Calu3 (cell line): ENCODE measurements at regions of chr22 and their contacts with region 1.

Region 1: GRCh38 chr22:19218541-19219233 is 40.2 kb upstream of the SLC25A1 start:
- DNase-seq: no peak
- H3K4me3 Mint-ChIP-seq: no peak overlapping the region
- H3K27ac Mint-ChIP-seq: no peak overlapping the region
- H3K4me1 Mint-ChIP-seq: no peaks in the 10 kb centered on the region
- H3K27me3 Mint-ChIP-seq: no peaks in the 10 kb centered on the region
- CTCF ChIP-seq: no peak

Region 2: GRCh38 chr22:19253143-19253542 is 34.5 kb after region 1 on chr22:
- CTCF ChIA-PET with region 1: no interaction called
- intact Hi-C with region 1: no loop called
- DNase-seq: no peak
- H3K4me3 Mint-ChIP-seq: no peak overlapping the region
- H3K27ac Mint-ChIP-seq: no peak overlapping the region
- H3K4me1 Mint-ChIP-seq: no peaks in the 10 kb centered on the region
- H3K27me3 Mint-ChIP-seq: no peaks in the 10 kb centered on the region
- CTCF ChIP-seq: no peak

Region 3: DNA sequence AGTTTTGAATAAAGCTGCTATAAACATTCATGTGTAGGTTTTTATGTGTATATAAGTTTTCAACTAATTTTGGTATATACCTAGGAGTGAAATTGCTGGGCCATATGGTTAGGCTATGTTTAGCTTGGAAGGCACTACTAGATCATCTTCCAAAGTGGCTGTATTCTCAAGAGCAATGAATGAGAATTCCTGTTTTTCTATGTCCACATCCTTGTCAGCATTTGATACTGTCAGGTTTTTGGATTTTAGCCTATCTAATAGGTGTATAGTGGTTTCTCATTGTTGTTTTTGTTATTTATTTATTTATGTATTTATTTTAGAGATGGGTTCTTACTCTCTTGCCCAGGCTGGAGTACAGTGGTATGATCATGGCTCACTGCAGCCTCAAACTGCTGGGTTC is 99.2 kb after region 1 on chr22:
- CTCF ChIA-PET with region 1: no interaction called
- intact Hi-C with region 1: no loop called
- DNase-seq: no peak
- H3K4me3 Mint-ChIP-seq: no peak overlapping the region
- H3K27ac Mint-ChIP-seq: no peak overlapping the region
- H3K4me1 Mint-ChIP-seq: no peaks in the 10 kb centered on the region
- H3K27me3 Mint-ChIP-seq: no peaks in the 10 kb centered on the region
- CTCF ChIP-seq: no peak

Region 4: GRCh38 chr22:19337137-19337536 is 118.5 kb after region 1 on chr22:
- CTCF ChIA-PET with region 1: interaction called, 10 read pairs
- intact Hi-C with region 1: no loop called
- DNase-seq: no peak
- H3K4me3 Mint-ChIP-seq: no peak overlapping the region
- H3K27ac Mint-ChIP-seq: no peak overlapping the region
- H3K4me1 Mint-ChIP-seq: peaks cover 10% of the 10 kb centered on the region
- H3K27me3 Mint-ChIP-seq: no peaks in the 10 kb centered on the region
- CTCF ChIP-seq: no peak